ENCODE measurements at regions of chr1 and their contacts with region 1.

Region 1: GRCh38 chr1:204591594-204592051 is 75.4 kb downstream of the MDM4 start:
- DNase-seq: peak in 1 of 2 experiments; percentile 74
- H3K4me3 ChIP-seq: no peak overlapping the region
- H3K27ac ChIP-seq: no peak overlapping the region
- H3K4me1 ChIP-seq: peaks cover 32% of the 10 kb centered on the region
- H3K27me3 ChIP-seq: no peaks in the 10 kb centered on the region
- CTCF ChIP-seq: no peak

Region 2: GRCh38 chr1:203351037-203352013 is 1240.3 kb before region 1 on chr1 and contains the start of gene FMOD:
- CTCF ChIA-PET with region 1: interaction called, 16 read pairs
- POLR2A ChIA-PET with region 1: no interaction called
- intact Hi-C with region 1: no loop called
- DNase-seq: no peak
- H3K4me3 ChIP-seq: no peak within 1 kb of the TSS
- H3K27ac ChIP-seq: no peak within 1 kb of the TSS
- H3K4me1 ChIP-seq: no peaks in the 10 kb centered on the region
- H3K27me3 ChIP-seq: peaks cover 95% of the 10 kb centered on the region
- CTCF ChIP-seq: no peak
- total RNA-seq, gene FMOD: not detected in 2 replicates

Region 3: DNA sequence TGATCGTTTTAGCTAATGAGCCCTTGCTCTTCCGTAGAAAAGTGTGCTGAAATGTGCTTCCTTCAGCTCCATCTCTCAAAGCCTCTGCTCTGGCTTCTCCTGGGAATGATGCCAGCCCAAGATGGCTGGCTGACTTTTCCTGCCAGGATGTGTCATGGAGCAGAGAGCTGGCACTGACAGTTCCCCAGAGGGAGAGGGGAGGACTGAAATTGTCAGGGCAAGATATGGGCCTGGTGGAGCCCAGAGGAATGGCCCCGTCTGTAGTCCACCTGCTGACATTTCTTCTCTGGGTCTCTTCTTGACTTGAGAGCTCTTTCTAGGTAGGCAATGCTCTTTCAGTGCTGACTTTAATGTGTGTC is 206.7 kb before region 1 on chr1:
- CTCF ChIA-PET with region 1: no interaction called
- POLR2A ChIA-PET with region 1: no interaction called
- intact Hi-C with region 1: no loop called
- DNase-seq: no peak
- H3K4me3 ChIP-seq: no peak overlapping the region
- H3K27ac ChIP-seq: no peak overlapping the region
- H3K4me1 ChIP-seq: peaks cover 18% of the 10 kb centered on the region
- H3K27me3 ChIP-seq: no peaks in the 10 kb centered on the region
- CTCF ChIP-seq: no peak

Region 4: GRCh38 chr1:204507388-204508105 is 84.1 kb before region 1 on chr1:
- CTCF ChIA-PET with region 1: no interaction called
- POLR2A ChIA-PET with region 1: no interaction called
- intact Hi-C with region 1: no loop called
- DNase-seq: peak; percentile 62 to 66
- H3K4me3 ChIP-seq: peak overlapping the region; percentile 65
- H3K27ac ChIP-seq: peak overlapping the region; percentile 93
- H3K4me1 ChIP-seq: peaks cover 38% of the 10 kb centered on the region
- H3K27me3 ChIP-seq: no peaks in the 10 kb centered on the region
- CTCF ChIP-seq: no peak

Region 5: DNA sequence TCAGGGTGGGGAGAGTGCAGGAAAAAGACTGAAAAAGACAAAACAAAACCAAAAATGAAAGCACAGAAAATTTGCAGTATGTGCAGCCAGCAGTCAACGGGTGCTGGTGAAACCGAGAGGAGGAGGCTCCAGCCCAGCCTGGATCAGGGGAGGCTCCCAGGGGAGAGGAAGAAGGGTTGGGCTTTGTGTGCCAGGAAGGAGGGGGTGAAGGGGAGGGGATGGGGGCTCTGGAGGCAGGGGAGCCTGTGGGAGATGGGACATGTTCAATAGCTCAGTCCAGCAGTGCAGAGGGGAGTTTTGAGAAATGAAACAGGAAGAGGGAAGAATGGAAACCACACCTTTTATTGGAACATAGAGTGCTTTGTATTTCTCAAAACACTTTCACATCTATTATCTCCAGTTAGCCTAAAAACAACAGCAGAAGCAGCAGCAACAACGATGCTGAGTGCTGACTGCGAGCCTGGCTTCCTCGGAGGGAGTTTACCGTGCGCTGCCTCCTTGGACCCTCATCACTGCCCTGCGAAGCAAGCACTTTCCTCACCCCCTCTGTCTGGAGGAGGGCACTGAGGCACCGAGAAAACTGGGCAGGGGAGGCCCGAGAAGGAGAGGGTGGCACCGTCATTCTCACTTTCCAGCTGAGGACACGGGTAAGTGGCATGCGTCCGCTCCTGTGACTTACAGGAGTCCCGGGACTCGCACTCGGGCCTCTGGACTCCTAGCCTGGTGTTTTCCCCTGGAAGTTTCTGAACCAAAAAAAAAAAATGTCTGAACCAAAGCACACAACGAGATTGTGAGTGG is 12.6 kb before region 1 on chr1:
- CTCF ChIA-PET with region 1: interaction called, 16 read pairs
- POLR2A ChIA-PET with region 1: no interaction called
- intact Hi-C with region 1: no loop called
- DNase-seq: no peak
- H3K4me3 ChIP-seq: no peak overlapping the region
- H3K27ac ChIP-seq: no peak overlapping the region
- H3K4me1 ChIP-seq: peaks cover 6% of the 10 kb centered on the region
- H3K27me3 ChIP-seq: no peaks in the 10 kb centered on the region
- CTCF ChIP-seq: no peak

Region 6: GRCh38 chr1:204763706-204764427 is 172.2 kb after region 1 on chr1:
- CTCF ChIA-PET with region 1: interaction called, 12 read pairs
- POLR2A ChIA-PET with region 1: no interaction called
- intact Hi-C with region 1: no loop called
- DNase-seq: peak; percentile 72 to 75
- H3K4me3 ChIP-seq: no peak overlapping the region
- H3K27ac ChIP-seq: no peak overlapping the region
- H3K4me1 ChIP-seq: peaks cover 6% of the 10 kb centered on the region; the same call in 1 of the 2 replicates
- H3K27me3 ChIP-seq: peaks cover 18% of the 10 kb centered on the region
- CTCF ChIP-seq: peak; percentile 82

Measured in PC-9 (cell line).